Spleen (tissue), 13 donors: ENCODE measurements at regions of chr6 and their contacts with region 1.

Region 1: DNA sequence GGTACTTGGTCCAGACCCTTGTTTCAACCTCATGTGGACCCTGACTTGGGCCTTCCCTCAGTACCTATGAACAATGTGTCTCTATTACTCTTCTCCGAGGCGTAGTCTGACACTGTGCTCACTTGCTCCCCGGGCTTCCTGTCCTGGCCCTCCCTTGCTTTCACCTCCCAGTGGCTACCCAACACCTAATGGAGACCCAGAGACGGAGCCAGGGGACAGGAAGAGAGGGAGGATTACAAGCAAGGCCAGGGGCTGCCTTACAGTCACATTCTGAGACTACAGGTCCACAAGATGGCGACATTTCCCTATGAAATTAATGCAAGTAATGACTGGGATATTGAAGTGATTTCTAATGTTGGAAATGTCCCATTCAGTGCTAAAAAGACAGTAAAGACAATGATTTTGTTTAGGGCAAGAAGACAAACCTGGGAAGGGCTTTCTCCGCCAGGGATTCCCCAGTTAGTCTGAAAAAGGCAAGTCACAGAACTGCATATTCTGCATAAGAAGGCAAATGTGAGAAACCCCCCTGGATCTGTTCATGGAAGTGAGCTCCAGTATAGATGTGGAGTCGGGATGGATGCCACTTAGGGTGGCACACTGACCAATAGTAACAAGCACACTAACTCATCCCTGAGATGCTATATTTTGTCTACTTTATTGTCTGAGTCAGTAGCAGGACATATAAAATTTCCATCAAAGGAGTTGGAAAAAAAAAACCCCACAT is 44.0 kb upstream of the ZBTB24 start:
- DNase-seq: no peak
- H3K4me3 ChIP-seq: no peak overlapping the region
- H3K27ac ChIP-seq: no peak overlapping the region
- H3K4me1 ChIP-seq: peaks cover 0 to 4% (median 0%) of the 10 kb centered on the region in 6 donors
- H3K27me3 ChIP-seq: no peaks in the 10 kb centered on the region
- CTCF ChIP-seq: peak; percentile 27 to 73 (median 58)
- POLR2A ChIP-seq: no peak

Region 2: DNA sequence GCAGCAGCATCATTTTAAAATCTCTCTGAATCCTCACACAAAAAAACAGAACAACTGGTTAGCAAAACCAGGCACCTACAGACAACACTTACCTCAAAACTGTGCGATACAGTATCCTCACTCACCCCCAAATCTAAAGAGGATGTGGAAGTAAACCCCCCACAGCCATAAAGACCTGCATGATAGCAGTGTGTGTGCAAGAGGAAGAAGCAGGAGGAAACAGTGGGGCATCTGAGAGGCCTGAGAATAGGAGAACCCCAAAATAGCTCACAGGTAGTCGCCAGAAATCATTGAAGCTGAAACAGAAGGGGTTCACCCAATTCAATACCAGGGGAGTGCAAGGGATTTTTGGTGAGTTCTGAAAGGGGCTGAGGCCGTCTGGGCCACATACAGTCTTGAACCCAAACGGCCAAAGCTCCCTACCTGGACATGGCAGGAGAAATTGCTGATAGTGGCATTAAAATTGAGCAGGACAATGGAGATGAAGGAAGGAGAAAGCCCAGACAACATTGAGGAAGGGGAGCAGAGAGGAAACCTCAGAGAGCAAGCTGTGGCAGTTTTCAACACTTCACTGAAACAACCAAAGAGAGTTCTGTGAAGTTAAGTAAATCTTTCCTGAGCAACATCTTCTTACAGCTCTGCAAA is 293.8 kb after region 1 on chr6:
- intact Hi-C with region 1: no loop called
- DNase-seq: no peak
- H3K4me3 ChIP-seq: no peak overlapping the region
- H3K27ac ChIP-seq: peak overlapping the region in 5 of 8 donors; percentile 6 to 61 (median 42)
- H3K4me1 ChIP-seq: peaks cover 0 to 20% (median 5%) of the 10 kb centered on the region in 6 donors
- H3K27me3 ChIP-seq: no peaks in the 10 kb centered on the region
- CTCF ChIP-seq: no peak
- POLR2A ChIP-seq: no peak

Region 3: GRCh38 chr6:110053395-110054240 is 526.6 kb after region 1 on chr6:
- intact Hi-C with region 1: loop called (anchors 10 kb)
- DNase-seq: no peak
- H3K4me3 ChIP-seq: no peak overlapping the region
- H3K27ac ChIP-seq: no peak overlapping the region
- H3K4me1 ChIP-seq: peaks cover 0 to 19% (median 2%) of the 10 kb centered on the region in 6 donors
- H3K27me3 ChIP-seq: no peaks in the 10 kb centered on the region
- CTCF ChIP-seq: peak; percentile 28 to 78 (median 68)
- POLR2A ChIP-seq: no peak